Left cardiac atrium (tissue), 4 donors: ENCODE measurements at regions of chr20 and their contacts with region 1.

Region 1: DNA sequence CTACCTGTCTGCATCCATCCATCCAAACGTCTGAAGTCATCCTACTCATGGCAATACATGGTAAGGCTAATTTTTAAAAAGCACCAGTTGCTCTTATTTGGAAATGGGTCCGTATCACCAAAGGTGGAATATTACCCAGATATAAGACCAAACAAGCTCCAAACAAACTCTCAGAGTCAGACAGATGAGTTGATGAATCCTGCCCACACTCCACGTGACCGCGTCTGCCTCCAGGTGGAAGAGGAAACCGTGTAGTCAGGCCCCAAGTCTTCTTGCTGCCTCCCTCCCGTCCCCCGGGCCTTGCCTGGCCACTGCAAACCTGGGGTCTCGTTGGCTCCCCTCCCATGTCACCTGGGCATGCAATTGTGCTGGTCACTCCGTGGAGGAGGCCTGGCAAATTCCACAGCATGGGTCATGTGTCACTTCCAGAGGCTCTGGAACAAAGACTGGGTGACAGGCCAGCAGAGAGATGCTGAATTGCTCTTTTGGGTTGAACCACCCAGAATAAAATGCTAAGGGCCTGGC is 31.8 kb downstream of the CTCFL start:
- DNase-seq: no peak
- ATAC-seq: no peak

Region 2: GRCh38 chr20:57383447-57384347 is 109.5 kb before region 1 on chr20:
- intact Hi-C with region 1: loop called in 1 of 2 experiments (anchors 1 kb)
- DNase-seq: no peak
- ATAC-seq: no peak

Region 3: GRCh38 chr20:57391074-57391554 is 102.0 kb before region 1 on chr20 and contains the start of gene RBM38:
- intact Hi-C with region 1: loop called (anchors 5 kb)
- DNase-seq: peak; percentile 66
- ATAC-seq: peak; percentile 77 to 78
- total RNA-seq, gene RBM38: 78.6 to 101 TPM

Region 4: DNA sequence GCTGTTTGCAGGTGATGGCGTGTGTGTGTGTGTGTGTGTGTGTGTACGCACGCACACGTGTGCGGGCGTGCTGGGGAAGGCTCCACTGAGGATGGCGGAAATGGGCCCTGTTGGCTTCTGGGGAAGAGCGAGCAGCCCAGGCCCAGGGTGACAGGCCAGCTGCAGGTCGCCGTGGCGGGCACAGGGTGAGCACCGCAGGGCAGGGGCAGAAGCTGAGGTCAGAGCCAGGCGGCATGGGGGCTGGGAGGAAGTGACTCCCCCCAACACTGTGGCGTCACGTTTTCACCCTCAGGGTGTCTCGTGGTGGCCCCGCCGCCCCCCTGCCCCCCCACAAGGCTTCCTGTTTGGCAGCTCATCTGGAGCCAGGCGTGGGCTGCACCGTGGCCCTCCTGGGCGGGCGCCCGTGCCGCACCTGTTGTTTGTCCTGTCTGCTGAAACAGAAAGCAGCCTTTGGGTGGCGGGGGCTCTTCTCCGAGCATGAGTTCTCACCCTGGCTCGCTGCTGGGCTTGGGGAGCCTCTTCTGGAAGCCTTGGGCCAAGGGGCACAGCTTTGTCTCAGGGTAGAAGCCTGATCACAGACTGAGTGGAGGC is 94.8 kb before region 1 on chr20:
- intact Hi-C with region 1: loop called (anchors 5 kb)
- DNase-seq: peak; percentile 57
- ATAC-seq: peak; percentile 14 to 25